ENCODE measurements at regions of chr17 and their contacts with region 1.

Region 1: GRCh38 chr17:20059728-20060188 is 50.6 kb downstream of the SPECC1 start:
- DNase-seq: no peak

Region 2: GRCh38 chr17:19992803-19993713 is 66.7 kb before region 1 on chr17:
- intact Hi-C with region 1: no loop called
- DNase-seq: peak; percentile 95

Region 3: GRCh38 chr17:20074001-20074400 is 14.2 kb after region 1 on chr17:
- intact Hi-C with region 1: loop called in 1 of 2 experiments (anchors 1 kb)
- DNase-seq: no peak

Region 4: DNA sequence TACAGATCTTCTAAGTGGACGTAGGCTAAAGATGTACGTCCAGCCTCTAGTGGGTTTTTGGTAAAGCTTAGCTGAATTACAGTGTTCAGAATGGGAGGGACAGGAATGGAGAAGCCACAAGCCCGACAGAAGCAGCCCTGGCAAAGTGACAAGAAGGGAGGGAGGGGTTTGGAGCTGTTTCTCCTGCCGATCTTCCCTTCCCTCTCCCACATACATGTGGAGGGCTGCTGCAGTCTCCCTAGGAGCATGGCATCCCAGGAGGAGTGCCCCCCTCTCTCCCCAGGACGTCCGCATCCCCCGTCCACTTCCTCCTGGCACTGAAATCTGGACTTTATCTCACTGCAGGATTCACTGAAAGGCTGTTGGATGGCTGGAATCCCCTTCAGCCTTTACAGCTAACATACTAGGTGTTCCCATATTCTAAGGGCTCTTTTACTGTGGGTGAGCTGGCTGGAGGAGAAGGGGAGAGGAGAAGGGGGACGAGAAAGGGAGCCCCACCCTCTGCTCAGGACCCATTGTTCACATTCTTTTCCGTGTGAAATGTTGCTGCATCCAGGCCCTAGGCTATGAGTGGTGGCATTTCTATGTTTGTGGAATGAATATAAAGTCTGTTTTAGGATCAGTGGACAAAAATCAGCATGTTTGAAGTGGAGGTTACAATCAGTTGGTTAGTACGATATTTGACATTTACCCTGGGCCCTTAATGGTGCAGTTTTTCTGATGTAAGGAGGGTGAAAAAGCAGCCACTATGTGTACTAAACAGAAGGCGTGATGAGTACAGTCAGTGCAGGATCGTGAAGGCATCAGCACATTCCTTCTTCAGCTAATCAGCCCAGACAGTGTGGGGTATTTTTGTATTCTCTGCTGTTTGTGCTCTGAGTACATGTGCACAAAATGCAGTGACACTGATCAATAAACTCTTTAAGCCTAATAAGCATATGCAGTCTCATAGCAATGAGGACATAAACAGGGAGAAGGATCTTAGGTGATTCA is 44.0 kb after region 1 on chr17:
- intact Hi-C with region 1: no loop called
- DNase-seq: no peak

Measured in posterior vena cava (tissue), 2 donors.